ENCODE measurements at regions of chr12 and their contacts with region 1.

Region 1: GRCh38 chr12:67758119-67758518 is 109.6 kb downstream of the DYRK2 start:
- DNase-seq: no peak
- H3K4me3 Mint-ChIP-seq: no peak overlapping the region
- H3K27ac Mint-ChIP-seq: no peak overlapping the region
- H3K4me1 Mint-ChIP-seq: no peaks in the 10 kb centered on the region
- H3K27me3 Mint-ChIP-seq: no peaks in the 10 kb centered on the region

Region 2: GRCh38 chr12:67827820-67828383 is 69.8 kb after region 1 on chr12:
- intact Hi-C with region 1: loop called (anchors 1 kb)
- DNase-seq: no peak
- H3K4me3 Mint-ChIP-seq: peak overlapping the region; percentile 3
- H3K27ac Mint-ChIP-seq: peak overlapping the region; percentile 67
- H3K4me1 Mint-ChIP-seq: peaks cover 14% of the 10 kb centered on the region
- H3K27me3 Mint-ChIP-seq: no peaks in the 10 kb centered on the region

Measured in activated T-helper 1 cell treated with anti-CD3 and anti-CD28 coated beads, Interleukin-12 subunit alpha, Interleukin-12 subunit beta, Interleukin-2, Interleukin-4 antibody, amounts not matched to agents 30 ng/mL and 10 ng/mL and 1 ng/mL, durations not matched to agents 14 hours and 24 hours and 36 hours (primary cell).